Natural killer cell (primary cell): ENCODE measurements at regions of chr19 and their contacts with region 1.

Region 1: GRCh38 chr19:57552432-57552831 is 7.2 kb downstream of the ZNF550 start:
- DNase-seq: no peak
- ATAC-seq: no peak
- H3K4me3 ChIP-seq: no peak overlapping the region
- H3K4me3 Mint-ChIP-seq: no peak overlapping the region
- H3K27ac ChIP-seq: no peak overlapping the region
- H3K27ac Mint-ChIP-seq: no peak overlapping the region
- H3K4me1 ChIP-seq: no peaks in the 10 kb centered on the region
- H3K4me1 Mint-ChIP-seq: peaks cover 0 to 21% of the 10 kb centered on the region in 2 donors
- H3K27me3 ChIP-seq: no peaks in the 10 kb centered on the region
- H3K27me3 Mint-ChIP-seq: no peaks in the 10 kb centered on the region
- CTCF ChIP-seq: no peak

Region 2: DNA sequence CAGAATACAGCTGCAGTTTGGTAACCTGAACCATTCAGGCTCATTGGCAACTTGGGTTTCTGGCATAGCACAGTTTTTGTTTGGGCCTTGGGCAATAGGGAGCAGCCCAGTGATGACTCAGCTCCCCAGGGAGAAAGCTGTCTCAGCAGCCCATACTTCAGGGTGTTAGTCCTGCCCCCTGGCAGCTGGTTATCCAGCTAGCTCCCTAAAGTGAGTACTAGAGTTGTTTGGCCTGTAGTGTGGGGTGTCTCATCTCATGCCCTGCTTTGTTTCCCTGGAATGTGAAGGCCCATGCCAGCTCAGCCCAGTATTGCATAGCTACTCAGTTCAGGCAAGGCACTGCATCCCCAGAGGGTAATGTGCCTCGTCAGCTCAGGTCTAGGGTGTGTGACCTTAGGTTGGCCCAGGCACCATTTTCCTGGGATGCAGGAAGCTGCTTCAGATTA is 250.4 kb before region 1 on chr19:
- intact Hi-C with region 1: no loop called
- DNase-seq: no peak
- ATAC-seq: peak in 1 of 3 donors; percentile 12
- H3K4me3 ChIP-seq: no peak overlapping the region
- H3K4me3 Mint-ChIP-seq: no peak overlapping the region
- H3K27ac ChIP-seq: no peak overlapping the region
- H3K27ac Mint-ChIP-seq: no peak overlapping the region
- H3K4me1 ChIP-seq: no peaks in the 10 kb centered on the region
- H3K4me1 Mint-ChIP-seq: peaks cover 13 to 16% of the 10 kb centered on the region in 2 donors
- H3K27me3 ChIP-seq: no peaks in the 10 kb centered on the region
- H3K27me3 Mint-ChIP-seq: no peaks in the 10 kb centered on the region
- CTCF ChIP-seq: no peak

Region 3: DNA sequence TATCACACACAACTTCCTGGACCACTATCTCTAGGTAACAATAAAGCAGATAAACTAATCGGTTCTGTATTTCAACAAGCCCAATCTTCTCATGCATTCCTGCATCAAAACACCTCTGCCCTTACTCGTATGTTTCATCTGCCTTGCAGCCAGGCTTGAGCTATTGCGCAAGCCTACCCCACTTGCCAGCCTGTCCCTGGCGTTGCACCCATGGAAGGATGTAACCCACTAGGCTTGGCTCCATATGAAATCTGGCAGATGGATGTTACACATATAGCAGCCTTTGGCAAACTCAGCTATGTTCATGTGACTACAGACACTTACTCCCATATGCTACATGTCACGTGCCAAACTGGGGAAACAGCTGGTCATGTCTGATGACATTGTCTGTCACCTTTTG is 37.2 kb before region 1 on chr19:
- intact Hi-C with region 1: loop called (anchors 5 kb)
- DNase-seq: no peak
- ATAC-seq: no peak
- H3K4me3 ChIP-seq: no peak overlapping the region
- H3K4me3 Mint-ChIP-seq: no peak overlapping the region
- H3K27ac ChIP-seq: no peak overlapping the region
- H3K27ac Mint-ChIP-seq: no peak overlapping the region
- H3K4me1 ChIP-seq: no peaks in the 10 kb centered on the region
- H3K4me1 Mint-ChIP-seq: no peaks in the 10 kb centered on the region
- H3K27me3 ChIP-seq: no peaks in the 10 kb centered on the region
- H3K27me3 Mint-ChIP-seq: no peaks in the 10 kb centered on the region
- CTCF ChIP-seq: no peak

Region 4: DNA sequence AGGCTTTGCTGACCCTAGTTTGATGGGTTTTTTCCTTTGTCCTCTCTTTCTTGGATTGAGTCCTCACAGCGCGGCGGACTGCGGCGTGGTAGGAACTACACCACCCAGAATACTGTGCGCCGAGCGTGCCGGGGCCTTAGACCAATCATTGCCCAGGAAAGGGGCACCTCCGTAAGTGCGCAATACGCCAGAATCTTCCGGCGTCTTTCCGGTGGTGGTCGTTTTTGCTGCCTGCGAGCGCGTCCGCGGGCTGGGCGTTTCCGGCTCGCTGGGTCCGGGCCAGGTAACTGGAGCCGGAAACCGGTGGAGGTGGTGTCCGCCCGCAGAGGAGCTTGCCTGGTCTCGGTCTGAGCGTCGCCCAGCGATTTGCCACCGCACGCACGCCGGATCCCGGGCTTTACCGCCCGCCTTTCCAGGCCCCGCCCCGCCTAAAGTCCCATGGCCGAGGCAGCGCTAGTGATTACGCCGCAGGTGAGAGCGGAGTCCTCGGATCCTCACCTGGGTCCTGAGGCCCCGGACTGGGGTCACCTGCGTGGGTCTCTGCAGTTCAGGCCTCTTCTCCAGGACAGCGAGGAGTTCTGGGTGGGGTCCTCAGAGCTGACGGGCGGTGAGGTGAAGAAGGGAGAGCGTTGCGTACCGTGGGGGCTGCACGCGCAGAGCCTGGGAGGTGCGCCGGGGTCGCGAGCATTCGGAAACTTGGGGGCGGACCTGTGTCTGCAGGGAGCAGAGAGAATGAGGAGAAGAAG is 25.1 kb before region 1 on chr19 and contains the start of gene ZNF549:
- intact Hi-C with region 1: no loop called
- DNase-seq: peak; percentile 82 to 94
- ATAC-seq: peak; percentile 98 to 99 (median 99)
- H3K4me3 ChIP-seq: peak within 1 kb of the TSS; percentile 89
- H3K4me3 Mint-ChIP-seq: peak within 1 kb of the TSS; percentile 95
- H3K27ac ChIP-seq: peak within 1 kb of the TSS; percentile 81
- H3K27ac Mint-ChIP-seq: peak within 1 kb of the TSS; percentile 90 to 96
- H3K4me1 ChIP-seq: peaks cover 13% of the 10 kb centered on the region
- H3K4me1 Mint-ChIP-seq: peaks cover 23 to 26% of the 10 kb centered on the region in 2 donors
- H3K27me3 ChIP-seq: no peaks in the 10 kb centered on the region
- H3K27me3 Mint-ChIP-seq: no peaks in the 10 kb centered on the region
- CTCF ChIP-seq: no peak
- total RNA-seq, gene ZNF549: 7.1 to 12.1 (median 8.6) TPM

Region 5: DNA sequence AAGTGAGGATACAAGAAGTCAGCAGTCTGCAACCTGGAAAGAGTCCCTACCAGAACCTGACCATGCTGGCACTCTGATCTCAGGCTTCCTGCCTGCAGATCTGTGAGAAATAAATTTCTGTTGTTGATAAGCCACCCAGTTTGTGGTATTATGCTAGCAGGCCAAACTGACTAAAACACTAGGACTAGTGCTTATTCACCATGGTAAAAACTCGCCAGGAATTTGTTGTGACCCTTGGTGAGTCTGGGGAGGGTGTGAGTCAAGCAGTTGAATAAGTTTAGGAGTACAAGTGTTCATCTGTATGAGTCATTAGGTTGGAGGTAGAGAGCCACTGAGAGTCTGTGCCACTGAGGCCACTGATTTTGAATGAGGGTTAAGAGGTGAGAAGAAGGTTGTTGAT is 35.1 kb after region 1 on chr19:
- intact Hi-C with region 1: no loop called
- DNase-seq: no peak
- ATAC-seq: no peak
- H3K4me3 ChIP-seq: no peak overlapping the region
- H3K4me3 Mint-ChIP-seq: no peak overlapping the region
- H3K27ac ChIP-seq: no peak overlapping the region
- H3K27ac Mint-ChIP-seq: no peak overlapping the region
- H3K4me1 ChIP-seq: peaks cover 17% of the 10 kb centered on the region
- H3K4me1 Mint-ChIP-seq: peaks cover 16 to 23% of the 10 kb centered on the region in 2 donors
- H3K27me3 ChIP-seq: no peaks in the 10 kb centered on the region
- H3K27me3 Mint-ChIP-seq: no peaks in the 10 kb centered on the region
- CTCF ChIP-seq: no peak

Region 6: GRCh38 chr19:58326914-58327726 is 774.7 kb after region 1 on chr19 and contains the start of gene ZSCAN22:
- intact Hi-C with region 1: no loop called
- DNase-seq: peak; percentile 87 to 93
- ATAC-seq: peak; percentile 71 to 87 (median 74)
- H3K4me3 ChIP-seq: peak within 1 kb of the TSS; percentile 61
- H3K4me3 Mint-ChIP-seq: no peak within 1 kb of the TSS
- H3K27ac ChIP-seq: peak within 1 kb of the TSS; percentile 96
- H3K27ac Mint-ChIP-seq: no peak within 1 kb of the TSS
- H3K4me1 ChIP-seq: peaks cover 29% of the 10 kb centered on the region
- H3K4me1 Mint-ChIP-seq: no peaks in the 10 kb centered on the region
- H3K27me3 ChIP-seq: no peaks in the 10 kb centered on the region
- H3K27me3 Mint-ChIP-seq: no peaks in the 10 kb centered on the region
- CTCF ChIP-seq: no peak
- total RNA-seq, gene ZSCAN22: 2.9 to 4.8 (median 3.2) TPM